ENCODE measurements at regions of chr6 and their contacts with region 1.

Region 1: DNA sequence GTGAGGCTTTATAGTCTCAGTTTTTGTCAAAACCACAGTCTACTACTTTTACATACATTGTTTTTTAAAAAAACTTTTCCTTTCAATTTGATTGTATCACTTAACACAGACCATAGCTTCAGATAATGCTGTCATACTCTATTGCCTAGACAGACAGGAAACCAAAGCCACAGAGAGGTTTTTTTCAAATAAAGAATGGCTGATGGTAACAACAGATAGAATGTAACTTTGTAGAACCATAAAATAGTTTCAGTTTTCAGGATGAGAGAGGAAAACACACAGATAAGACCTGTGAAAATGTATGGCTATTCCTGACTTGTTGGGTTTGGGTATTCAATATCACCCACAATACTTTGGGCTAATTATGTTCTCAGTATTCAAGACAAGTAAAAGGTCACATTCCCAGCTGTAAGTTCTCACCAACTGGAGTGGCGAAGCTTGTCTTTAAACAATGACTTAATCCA is 94.0 kb downstream of the ADGRG6 start:
- DNase-seq: peak in 7 of 9 donors; percentile 72 to 90 (median 88)
- ATAC-seq: peak; percentile 97
- H3K4me3 ChIP-seq: peak overlapping the region; percentile 30
- H3K4me3 Mint-ChIP-seq: peak overlapping the region in 9 of 10 donors; percentile 47 to 78 (median 69)
- H3K27ac ChIP-seq: peak overlapping the region; percentile 80
- H3K27ac Mint-ChIP-seq: peak overlapping the region; percentile 9 to 99 (median 97)
- H3K4me1 ChIP-seq: peaks cover 9 to 33% of the 10 kb centered on the region in 2 donors
- H3K4me1 Mint-ChIP-seq: peaks cover 10 to 76% (median 61%) of the 10 kb centered on the region in 7 donors
- H3K27me3 ChIP-seq: no peaks in the 10 kb centered on the region
- H3K27me3 Mint-ChIP-seq: peaks cover 0 to 58% (median 0%) of the 10 kb centered on the region in 5 donors

Region 2: GRCh38 chr6:141483598-141484061 is 912.2 kb before region 1 on chr6:
- CTCF ChIA-PET with region 1: no interaction called
- POLR2A ChIA-PET with region 1: no interaction called
- intact Hi-C with region 1: loop called in 1 of 2 experiments (anchors 5 kb)
- DNase-seq: peak in 8 of 9 donors; percentile 32 to 85 (median 82)
- ATAC-seq: peak; percentile 98
- H3K4me3 ChIP-seq: peak overlapping the region; percentile 47
- H3K4me3 Mint-ChIP-seq: peak overlapping the region; percentile 74 to 93 (median 84)
- H3K27ac ChIP-seq: peak overlapping the region; percentile 68
- H3K27ac Mint-ChIP-seq: peak overlapping the region; percentile 81 to 97 (median 92)
- H3K4me1 ChIP-seq: peaks cover 11 to 24% of the 10 kb centered on the region in 2 donors
- H3K4me1 Mint-ChIP-seq: peaks cover 11 to 57% (median 41%) of the 10 kb centered on the region in 7 donors
- H3K27me3 ChIP-seq: no peaks in the 10 kb centered on the region
- H3K27me3 Mint-ChIP-seq: no peaks in the 10 kb centered on the region

Region 3: DNA sequence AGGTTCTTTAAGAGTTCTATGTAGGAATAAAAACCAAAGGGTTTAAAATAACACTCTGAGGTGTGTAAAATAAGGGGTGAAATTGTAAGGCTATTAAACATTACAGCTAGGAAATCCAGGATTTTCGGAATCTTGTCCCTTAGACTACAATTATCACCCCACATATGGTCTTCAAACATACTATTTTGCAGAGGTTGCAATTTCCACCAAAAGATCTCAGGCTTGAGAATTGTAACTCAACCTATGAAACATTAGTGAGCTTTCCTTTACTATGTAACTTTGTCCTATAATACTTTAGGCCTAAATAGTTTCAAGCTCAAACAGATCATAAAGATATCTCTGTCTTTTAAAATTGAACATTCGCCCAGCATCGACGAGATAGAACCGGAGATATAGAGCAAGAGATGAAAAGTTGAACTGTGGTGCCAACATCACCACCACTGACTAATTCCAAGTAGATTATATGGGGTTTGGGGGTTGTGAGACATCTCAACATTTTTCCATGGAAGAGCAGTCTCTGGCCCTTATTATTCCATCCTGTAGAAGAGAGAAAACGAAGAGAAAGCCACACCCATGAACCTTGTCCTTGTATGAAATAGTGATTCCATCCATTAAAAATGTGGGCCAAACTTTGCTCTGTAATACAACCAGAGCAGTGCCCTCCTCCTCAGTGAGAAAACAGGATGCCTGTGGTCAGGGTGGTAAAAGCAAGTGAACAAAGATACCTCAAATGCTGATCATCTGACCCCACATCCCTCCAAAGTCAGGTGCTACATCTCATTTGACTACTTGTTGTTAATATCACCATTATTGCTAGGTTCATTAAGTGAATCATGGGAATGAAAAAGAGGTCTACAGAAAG is 547.5 kb before region 1 on chr6:
- CTCF ChIA-PET with region 1: no interaction called
- POLR2A ChIA-PET with region 1: no interaction called
- intact Hi-C with region 1: no loop called
- DNase-seq: peak in 1 of 9 donors; percentile 9
- ATAC-seq: peak; percentile 73
- H3K4me3 ChIP-seq: no peak overlapping the region
- H3K4me3 Mint-ChIP-seq: peak overlapping the region in 4 of 10 donors; percentile 7 to 65 (median 36)
- H3K27ac ChIP-seq: no peak overlapping the region
- H3K27ac Mint-ChIP-seq: peak overlapping the region in 7 of 9 donors; percentile 9 to 91 (median 29)
- H3K4me1 ChIP-seq: peaks cover 0 to 31% of the 10 kb centered on the region in 2 donors
- H3K4me1 Mint-ChIP-seq: peaks cover 2 to 28% (median 12%) of the 10 kb centered on the region in 7 donors
- H3K27me3 ChIP-seq: no peaks in the 10 kb centered on the region
- H3K27me3 Mint-ChIP-seq: no peaks in the 10 kb centered on the region

Region 4: DNA sequence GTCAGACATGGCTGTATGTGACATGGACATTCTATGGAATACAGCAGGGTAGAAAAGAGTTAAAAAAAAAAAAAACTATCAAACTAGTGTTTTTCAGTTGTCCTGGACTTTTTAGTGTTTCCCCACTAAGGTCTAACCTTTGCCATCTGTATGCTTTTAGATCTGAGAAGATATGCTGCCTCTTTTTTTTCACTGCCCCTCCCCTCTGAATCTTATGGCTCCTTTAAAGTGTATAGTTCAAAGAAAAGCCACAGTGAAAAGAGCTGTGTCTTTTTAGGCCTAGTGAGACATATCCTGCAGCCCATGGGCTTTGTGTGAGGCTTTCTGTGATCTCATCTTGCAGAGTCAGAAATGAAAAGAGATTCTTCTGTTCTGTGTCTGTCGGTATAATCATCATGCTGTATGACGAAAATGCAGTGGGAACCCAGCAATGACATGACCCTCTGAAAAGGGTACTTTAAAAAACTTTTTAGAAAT is 64.7 kb before region 1 on chr6:
- CTCF ChIA-PET with region 1: no interaction called
- POLR2A ChIA-PET with region 1: no interaction called
- intact Hi-C with region 1: loop called in 1 of 2 experiments (anchors 2 kb)
- DNase-seq: peak in 7 of 9 donors; percentile 51 to 69 (median 60)
- ATAC-seq: peak; percentile 94
- H3K4me3 ChIP-seq: no peak overlapping the region
- H3K4me3 Mint-ChIP-seq: peak overlapping the region in 4 of 10 donors; percentile 23 to 45 (median 33)
- H3K27ac ChIP-seq: no peak overlapping the region
- H3K27ac Mint-ChIP-seq: peak overlapping the region in 5 of 9 donors; percentile 43 to 73 (median 61)
- H3K4me1 ChIP-seq: peaks cover 0 to 11% of the 10 kb centered on the region in 2 donors
- H3K4me1 Mint-ChIP-seq: peaks cover 4 to 21% (median 12%) of the 10 kb centered on the region in 7 donors
- H3K27me3 ChIP-seq: no peaks in the 10 kb centered on the region
- H3K27me3 Mint-ChIP-seq: peaks cover 0 to 21% (median 0%) of the 10 kb centered on the region in 5 donors

Region 5: GRCh38 chr6:142566628-142567396 is 171.0 kb after region 1 on chr6:
- CTCF ChIA-PET with region 1: no interaction called
- POLR2A ChIA-PET with region 1: no interaction called
- intact Hi-C with region 1: loop called in 1 of 2 experiments (anchors 5 kb)
- DNase-seq: peak in 8 of 9 donors; percentile 17 to 69 (median 54)
- ATAC-seq: peak; percentile 81
- H3K4me3 ChIP-seq: no peak overlapping the region
- H3K4me3 Mint-ChIP-seq: peak overlapping the region in 7 of 10 donors; percentile 8 to 78 (median 51)
- H3K27ac ChIP-seq: no peak overlapping the region
- H3K27ac Mint-ChIP-seq: peak overlapping the region in 8 of 9 donors; percentile 51 to 92 (median 76)
- H3K4me1 ChIP-seq: peaks cover 0 to 60% of the 10 kb centered on the region in 2 donors
- H3K4me1 Mint-ChIP-seq: peaks cover 19 to 85% (median 74%) of the 10 kb centered on the region in 7 donors
- H3K27me3 ChIP-seq: no peaks in the 10 kb centered on the region
- H3K27me3 Mint-ChIP-seq: no peaks in the 10 kb centered on the region

Region 6: DNA sequence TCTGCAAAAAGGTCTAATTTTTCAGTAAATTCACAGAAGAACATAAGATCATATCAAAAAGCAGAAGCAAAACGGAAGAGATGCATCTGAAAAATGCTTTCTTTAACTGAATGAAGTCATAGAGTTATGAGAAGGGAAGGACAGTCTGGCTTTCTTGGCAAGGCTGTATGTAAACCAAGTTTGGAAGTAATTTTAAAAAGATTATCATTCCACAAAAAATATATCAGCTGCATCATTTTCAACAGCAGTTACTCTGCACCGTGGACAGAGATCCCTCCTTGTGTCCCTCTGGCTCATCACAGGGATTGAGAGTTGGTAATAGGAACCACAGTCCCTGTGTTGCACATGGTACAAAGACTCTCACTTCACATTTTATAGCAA is 290.7 kb after region 1 on chr6:
- CTCF ChIA-PET with region 1: no interaction called
- POLR2A ChIA-PET with region 1: no interaction called
- intact Hi-C with region 1: loop called (anchors 5 kb)
- DNase-seq: no peak
- ATAC-seq: peak; percentile 12
- H3K4me3 ChIP-seq: no peak overlapping the region
- H3K4me3 Mint-ChIP-seq: peak overlapping the region in 9 of 10 donors; percentile 18 to 76 (median 68)
- H3K27ac ChIP-seq: peak overlapping the region; percentile 22
- H3K27ac Mint-ChIP-seq: peak overlapping the region in 8 of 9 donors; percentile 61 to 90 (median 80)
- H3K4me1 ChIP-seq: peaks cover 0 to 21% of the 10 kb centered on the region in 2 donors
- H3K4me1 Mint-ChIP-seq: peaks cover 0 to 53% (median 41%) of the 10 kb centered on the region in 7 donors
- H3K27me3 ChIP-seq: no peaks in the 10 kb centered on the region
- H3K27me3 Mint-ChIP-seq: no peaks in the 10 kb centered on the region

Region 7: DNA sequence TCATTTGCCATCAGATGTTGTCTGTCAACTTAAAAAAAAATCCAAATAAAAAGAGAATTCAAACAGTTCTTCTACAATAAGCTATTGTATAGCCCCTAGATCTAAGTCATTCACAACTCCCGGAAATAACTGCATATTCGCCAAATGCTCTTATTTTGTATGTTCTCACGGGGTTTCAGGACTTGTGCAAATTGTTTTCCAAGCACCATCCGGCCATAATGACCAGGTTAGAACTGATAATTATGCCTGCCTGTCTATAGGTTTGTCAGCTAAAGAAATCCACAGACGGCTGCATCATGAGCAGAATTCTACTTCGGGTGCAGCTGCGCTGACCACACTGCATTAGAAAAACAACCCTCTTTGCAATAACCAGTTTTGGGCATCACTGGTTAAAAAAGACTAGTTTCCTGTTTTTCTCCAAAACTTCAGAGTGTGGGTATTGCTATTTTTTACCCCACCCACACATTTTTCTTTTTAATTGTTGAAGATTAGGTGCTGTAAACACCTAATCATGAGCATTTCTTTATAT is 461.5 kb after region 1 on chr6:
- CTCF ChIA-PET with region 1: no interaction called
- POLR2A ChIA-PET with region 1: no interaction called
- intact Hi-C with region 1: loop called in 1 of 2 experiments (anchors 5 kb)
- DNase-seq: peak in 7 of 9 donors; percentile 54 to 77 (median 68)
- ATAC-seq: peak; percentile 59
- H3K4me3 ChIP-seq: peak overlapping the region; percentile 54
- H3K4me3 Mint-ChIP-seq: peak overlapping the region; percentile 72 to 88 (median 84)
- H3K27ac ChIP-seq: peak overlapping the region; percentile 86
- H3K27ac Mint-ChIP-seq: peak overlapping the region; percentile 91 to 100 (median 98)
- H3K4me1 ChIP-seq: peaks cover 62 to 81% of the 10 kb centered on the region in 2 donors
- H3K4me1 Mint-ChIP-seq: peaks cover 54 to 98% (median 93%) of the 10 kb centered on the region in 7 donors
- H3K27me3 ChIP-seq: no peaks in the 10 kb centered on the region
- H3K27me3 Mint-ChIP-seq: no peaks in the 10 kb centered on the region

Region 8: GRCh38 chr6:143450453-143451371 is 1054.9 kb after region 1 on chr6 and contains the starts of genes ADAT2 and PEX3:
- CTCF ChIA-PET with region 1: interaction called, 3 read pairs
- POLR2A ChIA-PET with region 1: interaction called, 8 read pairs
- intact Hi-C with region 1: loop called in 1 of 2 experiments (anchors 5 kb)
- DNase-seq: peak; percentile 87 to 95 (median 94)
- ATAC-seq: peak; percentile 98
- H3K4me3 ChIP-seq: peak within 1 kb of the TSS; percentile 89
- H3K4me3 Mint-ChIP-seq: peak within 1 kb of the TSS; percentile 84 to 100 (median 99)
- H3K27ac ChIP-seq: peak within 1 kb of the TSS; percentile 80
- H3K27ac Mint-ChIP-seq: peak within 1 kb of the TSS; percentile 93 to 99 (median 96)
- H3K4me1 ChIP-seq: peaks cover 14 to 18% of the 10 kb centered on the region in 2 donors
- H3K4me1 Mint-ChIP-seq: peaks cover 20 to 61% (median 49%) of the 10 kb centered on the region in 7 donors
- H3K27me3 ChIP-seq: no peaks in the 10 kb centered on the region
- H3K27me3 Mint-ChIP-seq: no peaks in the 10 kb centered on the region
- total RNA-seq, gene ADAT2: 18.4 to 25.8 (median 20.8) TPM
- total RNA-seq, gene PEX3: 10.9 to 28.8 (median 19.1) TPM

Measured in naive thymus-derived CD4-positive, alpha-beta T cell (primary cell).